ENCODE measurements at regions of chr19 and their contacts with region 1.

Region 1: GRCh38 chr19:50804420-50805272 is 14.4 kb downstream of the ACP4 start:
- DNase-seq: peak; percentile 99
- H3K4me3 Mint-ChIP-seq: peak overlapping the region; percentile 98
- H3K27ac Mint-ChIP-seq: peak overlapping the region; percentile 100
- H3K4me1 Mint-ChIP-seq: peaks cover 28% of the 10 kb centered on the region
- H3K27me3 Mint-ChIP-seq: no peaks in the 10 kb centered on the region

Region 2: GRCh38 chr19:50817941-50818858 is 13.6 kb after region 1 on chr19:
- CTCF ChIA-PET with region 1: no interaction called
- intact Hi-C with region 1: loop called (anchors 1 kb)
- DNase-seq: peak; percentile 72
- H3K4me3 Mint-ChIP-seq: peak overlapping the region; percentile 67
- H3K27ac Mint-ChIP-seq: peak overlapping the region; percentile 37
- H3K4me1 Mint-ChIP-seq: peaks cover 43% of the 10 kb centered on the region
- H3K27me3 Mint-ChIP-seq: peaks cover 64% of the 10 kb centered on the region

Region 3: GRCh38 chr19:50835785-50836542 is 31.3 kb after region 1 on chr19:
- CTCF ChIA-PET with region 1: no interaction called
- intact Hi-C with region 1: loop called (anchors 2 kb)
- DNase-seq: peak; percentile 78
- H3K4me3 Mint-ChIP-seq: peak overlapping the region; percentile 73
- H3K27ac Mint-ChIP-seq: no peak overlapping the region
- H3K4me1 Mint-ChIP-seq: peaks cover 7% of the 10 kb centered on the region
- H3K27me3 Mint-ChIP-seq: peaks cover 47% of the 10 kb centered on the region

Region 4: DNA sequence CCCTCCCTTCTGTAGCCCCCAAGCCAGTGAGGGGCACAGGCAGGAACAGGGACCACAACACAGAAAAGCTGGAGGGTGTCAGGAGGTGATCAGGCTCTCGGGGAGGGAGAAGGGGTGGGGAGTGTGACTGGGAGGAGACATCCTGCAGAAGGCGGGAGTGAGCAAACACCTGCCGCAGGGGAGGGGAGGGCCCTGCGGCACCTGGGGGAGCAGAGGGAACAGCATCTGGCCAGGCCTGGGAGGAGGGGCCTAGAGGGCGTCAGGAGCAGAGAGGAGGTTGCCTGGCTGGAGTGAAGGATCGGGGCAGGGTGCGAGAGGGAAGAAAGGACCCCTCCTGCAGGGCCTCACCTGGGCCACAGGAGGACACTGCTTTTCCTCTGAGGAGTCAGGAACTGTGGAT is 54.2 kb after region 1 on chr19:
- CTCF ChIA-PET with region 1: no interaction called
- intact Hi-C with region 1: no loop called
- DNase-seq: no peak
- H3K4me3 Mint-ChIP-seq: no peak overlapping the region
- H3K27ac Mint-ChIP-seq: no peak overlapping the region
- H3K4me1 Mint-ChIP-seq: no peaks in the 10 kb centered on the region
- H3K27me3 Mint-ChIP-seq: peaks cover 51% of the 10 kb centered on the region

Measured in activated naive CD4-positive, alpha-beta T cell treated with anti-CD3 and anti-CD28 coated beads for 36 hours (primary cell).